ENCODE measurements at regions of chr15 and their contacts with region 1.

Region 1: DNA sequence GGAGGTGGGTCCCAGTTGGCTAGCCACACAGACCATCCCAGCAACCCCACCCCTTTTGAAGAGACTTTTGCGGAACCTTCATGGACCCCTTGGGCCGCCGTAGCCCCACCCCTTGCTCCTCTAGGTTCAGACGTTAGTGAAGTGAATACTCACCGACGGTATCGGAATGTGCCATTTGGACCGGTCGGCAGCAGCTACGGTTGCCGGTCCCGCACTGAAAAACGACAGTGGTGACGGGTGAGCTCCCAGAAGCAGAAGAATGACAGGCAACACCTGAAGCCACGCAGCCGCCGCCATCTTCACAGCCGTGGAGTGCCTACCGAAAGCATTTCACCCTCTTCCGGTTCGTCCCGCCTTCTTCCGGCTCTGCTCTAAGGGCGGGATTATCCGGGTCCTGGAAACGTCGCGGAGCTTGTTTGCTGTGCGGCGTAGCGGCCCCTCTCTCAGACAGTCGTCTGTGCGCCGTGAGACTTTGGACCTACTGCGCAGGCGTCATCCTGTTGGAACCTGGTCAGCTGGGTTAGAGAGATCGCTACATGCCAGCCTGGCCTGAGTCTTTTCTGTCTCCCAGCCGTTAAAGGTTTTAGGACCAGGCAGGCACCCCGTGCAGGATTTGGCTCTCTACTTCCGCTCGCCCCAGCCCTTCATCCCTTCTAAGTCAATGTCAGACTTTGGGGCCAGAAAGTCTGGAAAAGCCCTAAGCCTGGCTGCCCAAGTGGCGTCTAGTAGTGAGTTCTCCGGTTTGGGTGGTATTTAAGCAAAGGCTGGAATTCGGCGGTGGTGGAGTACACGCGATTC is at the starts of genes GANC and TMEM87A:
- DNase-seq: peak; percentile 70 to 96 (median 94)
- ATAC-seq: peak; percentile 95
- H3K4me3 ChIP-seq: peak within 1 kb of the TSS; percentile 71
- H3K4me3 Mint-ChIP-seq: peak within 1 kb of the TSS; percentile 91 to 100 (median 97)
- H3K27ac ChIP-seq: peak within 1 kb of the TSS; percentile 94
- H3K27ac Mint-ChIP-seq: peak within 1 kb of the TSS; percentile 97 to 100 (median 100)
- H3K4me1 ChIP-seq: peaks cover 25 to 26% of the 10 kb centered on the region in 2 donors
- H3K4me1 Mint-ChIP-seq: peaks cover 30 to 76% (median 67%) of the 10 kb centered on the region in 7 donors
- H3K27me3 ChIP-seq: no peaks in the 10 kb centered on the region
- H3K27me3 Mint-ChIP-seq: no peaks in the 10 kb centered on the region
- total RNA-seq, gene GANC: 31.3 to 57.2 (median 45.4) TPM
- total RNA-seq, gene TMEM87A: 41.8 to 61.8 (median 53.7) TPM

Region 2: DNA sequence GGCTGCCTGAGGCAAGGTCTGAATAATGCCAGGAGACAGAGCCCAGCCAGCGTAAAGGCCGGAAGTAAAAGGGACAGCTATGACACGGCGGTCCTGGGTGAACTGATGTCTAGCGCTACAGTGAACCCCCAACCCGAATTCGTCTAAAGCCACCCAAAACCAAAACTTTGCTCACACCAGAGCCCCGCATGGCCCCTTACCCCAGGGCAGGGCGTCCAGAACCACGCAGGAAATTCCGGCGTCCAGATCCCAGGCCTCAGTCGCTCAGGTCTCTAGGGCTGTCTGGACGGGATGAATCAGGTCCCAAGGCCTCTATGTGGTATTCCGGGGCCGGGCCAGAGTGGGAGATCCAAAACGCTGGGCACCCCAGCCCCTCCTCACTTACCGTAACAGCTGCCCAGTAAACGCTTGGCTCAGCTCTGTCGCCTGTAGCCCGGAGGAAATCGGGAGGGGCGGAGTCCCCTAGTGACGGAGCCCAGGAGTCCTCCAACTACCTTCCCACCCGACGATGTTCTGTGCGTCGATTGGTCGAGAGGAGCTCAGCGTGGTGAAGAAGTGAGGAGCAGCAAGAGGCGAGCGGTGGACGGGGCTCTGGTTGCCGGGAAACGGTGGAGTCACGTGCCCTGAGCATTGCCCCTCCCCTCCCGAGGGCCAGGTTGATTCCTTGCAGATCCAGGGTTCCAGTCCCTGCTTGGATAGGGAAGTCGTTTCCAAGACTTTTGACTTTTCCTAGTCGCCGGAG is 1708.5 kb before region 1 on chr15 and contains the start of gene CCDC32:
- CTCF ChIA-PET with region 1: no interaction called
- POLR2A ChIA-PET with region 1: no interaction called
- intact Hi-C with region 1: loop called in 1 of 2 experiments (anchors 10 kb)
- DNase-seq: peak; percentile 75 to 96 (median 93)
- ATAC-seq: peak; percentile 95
- H3K4me3 ChIP-seq: peak within 1 kb of the TSS; percentile 85
- H3K4me3 Mint-ChIP-seq: peak within 1 kb of the TSS; percentile 80 to 97 (median 96)
- H3K27ac ChIP-seq: peak within 1 kb of the TSS; percentile 96
- H3K27ac Mint-ChIP-seq: peak within 1 kb of the TSS; percentile 82 to 98 (median 95)
- H3K4me1 ChIP-seq: peaks cover 11 to 15% of the 10 kb centered on the region in 2 donors
- H3K4me1 Mint-ChIP-seq: peaks cover 35 to 57% (median 55%) of the 10 kb centered on the region in 7 donors
- H3K27me3 ChIP-seq: no peaks in the 10 kb centered on the region
- H3K27me3 Mint-ChIP-seq: peaks cover 0 to 8% (median 0%) of the 10 kb centered on the region in 5 donors
- total RNA-seq, gene CCDC32: 22.4 to 37.3 (median 33.3) TPM

Region 3: GRCh38 chr15:41401904-41402267 is 871.4 kb before region 1 on chr15:
- CTCF ChIA-PET with region 1: no interaction called
- POLR2A ChIA-PET with region 1: no interaction called
- intact Hi-C with region 1: loop called (anchors 1 to 5 kb)
- DNase-seq: no peak
- ATAC-seq: no peak
- H3K4me3 ChIP-seq: peak overlapping the region; percentile 92
- H3K4me3 Mint-ChIP-seq: peak overlapping the region; percentile 87 to 97 (median 96)
- H3K27ac ChIP-seq: peak overlapping the region; percentile 81
- H3K27ac Mint-ChIP-seq: peak overlapping the region; percentile 89 to 96 (median 94)
- H3K4me1 ChIP-seq: peaks cover 0 to 14% of the 10 kb centered on the region in 2 donors
- H3K4me1 Mint-ChIP-seq: peaks cover 0 to 32% (median 24%) of the 10 kb centered on the region in 7 donors
- H3K27me3 ChIP-seq: no peaks in the 10 kb centered on the region
- H3K27me3 Mint-ChIP-seq: no peaks in the 10 kb centered on the region

Region 4: DNA sequence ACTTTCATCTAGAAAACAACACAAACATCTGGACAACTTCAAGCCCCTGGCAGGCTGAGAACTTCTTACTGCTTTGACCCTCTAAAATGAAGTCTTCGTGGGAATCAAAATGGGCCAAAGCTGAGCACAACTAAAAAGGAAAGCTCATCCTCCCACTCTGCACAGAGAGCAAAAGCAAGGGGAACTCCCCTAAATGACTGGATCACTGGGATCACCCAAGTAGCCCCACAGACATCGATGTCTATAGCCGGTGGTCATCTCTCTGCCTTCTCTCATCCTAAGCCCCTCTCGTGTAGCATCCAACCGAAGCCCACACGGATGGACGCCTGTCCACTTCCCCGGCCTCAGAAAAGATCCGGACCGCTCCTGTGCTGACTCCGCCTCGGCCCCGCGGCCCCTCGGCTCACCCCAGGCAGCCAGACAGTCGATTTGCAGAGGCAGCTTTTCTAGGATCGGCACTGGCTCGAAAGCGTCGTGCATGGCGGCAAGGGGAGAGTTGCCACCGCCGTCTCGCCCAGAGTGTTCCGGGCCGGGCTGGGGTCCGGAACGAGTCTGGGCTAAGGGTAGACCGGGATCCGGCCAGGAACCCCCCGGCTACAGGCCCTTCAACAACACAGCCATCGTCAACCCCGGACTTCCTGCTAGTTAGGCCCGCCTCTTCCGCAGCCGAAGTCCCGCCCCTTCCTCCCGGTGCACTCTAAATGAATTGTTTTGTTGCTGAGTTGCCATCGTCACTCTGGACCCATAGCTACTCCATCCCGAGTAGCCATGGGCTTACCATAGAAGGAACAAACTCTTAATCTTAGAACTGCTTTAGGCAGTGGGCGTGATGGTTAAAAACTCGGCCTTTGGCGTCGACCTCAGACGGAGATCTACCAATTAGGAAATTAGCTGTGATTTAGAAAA is 65.4 kb before region 1 on chr15 and contains the start of gene VPS39:
- CTCF ChIA-PET with region 1: no interaction called
- POLR2A ChIA-PET with region 1: interaction called, 17 read pairs
- intact Hi-C with region 1: loop called (anchors 1 kb)
- DNase-seq: peak; percentile 58 to 82 (median 79)
- ATAC-seq: peak; percentile 98
- H3K4me3 ChIP-seq: peak within 1 kb of the TSS; percentile 95
- H3K4me3 Mint-ChIP-seq: peak within 1 kb of the TSS; percentile 79 to 97 (median 95)
- H3K27ac ChIP-seq: peak within 1 kb of the TSS; percentile 89
- H3K27ac Mint-ChIP-seq: peak within 1 kb of the TSS; percentile 79 to 97 (median 93)
- H3K4me1 ChIP-seq: peaks cover 18 to 22% of the 10 kb centered on the region in 2 donors
- H3K4me1 Mint-ChIP-seq: peaks cover 29 to 50% (median 42%) of the 10 kb centered on the region in 7 donors
- H3K27me3 ChIP-seq: no peaks in the 10 kb centered on the region
- H3K27me3 Mint-ChIP-seq: no peaks in the 10 kb centered on the region
- total RNA-seq, gene VPS39: 82.9 to 115 (median 97.3) TPM

Region 5: GRCh38 chr15:42385206-42385979 is 112.1 kb after region 1 on chr15:
- CTCF ChIA-PET with region 1: no interaction called
- POLR2A ChIA-PET with region 1: no interaction called
- intact Hi-C with region 1: no loop called
- DNase-seq: no peak
- ATAC-seq: peak; percentile 57
- H3K4me3 ChIP-seq: no peak overlapping the region
- H3K4me3 Mint-ChIP-seq: no peak overlapping the region
- H3K27ac ChIP-seq: no peak overlapping the region
- H3K27ac Mint-ChIP-seq: no peak overlapping the region
- H3K4me1 ChIP-seq: no peaks in the 10 kb centered on the region
- H3K4me1 Mint-ChIP-seq: peaks cover 0 to 4% (median 0%) of the 10 kb centered on the region in 7 donors
- H3K27me3 ChIP-seq: no peaks in the 10 kb centered on the region
- H3K27me3 Mint-ChIP-seq: no peaks in the 10 kb centered on the region

Region 6: DNA sequence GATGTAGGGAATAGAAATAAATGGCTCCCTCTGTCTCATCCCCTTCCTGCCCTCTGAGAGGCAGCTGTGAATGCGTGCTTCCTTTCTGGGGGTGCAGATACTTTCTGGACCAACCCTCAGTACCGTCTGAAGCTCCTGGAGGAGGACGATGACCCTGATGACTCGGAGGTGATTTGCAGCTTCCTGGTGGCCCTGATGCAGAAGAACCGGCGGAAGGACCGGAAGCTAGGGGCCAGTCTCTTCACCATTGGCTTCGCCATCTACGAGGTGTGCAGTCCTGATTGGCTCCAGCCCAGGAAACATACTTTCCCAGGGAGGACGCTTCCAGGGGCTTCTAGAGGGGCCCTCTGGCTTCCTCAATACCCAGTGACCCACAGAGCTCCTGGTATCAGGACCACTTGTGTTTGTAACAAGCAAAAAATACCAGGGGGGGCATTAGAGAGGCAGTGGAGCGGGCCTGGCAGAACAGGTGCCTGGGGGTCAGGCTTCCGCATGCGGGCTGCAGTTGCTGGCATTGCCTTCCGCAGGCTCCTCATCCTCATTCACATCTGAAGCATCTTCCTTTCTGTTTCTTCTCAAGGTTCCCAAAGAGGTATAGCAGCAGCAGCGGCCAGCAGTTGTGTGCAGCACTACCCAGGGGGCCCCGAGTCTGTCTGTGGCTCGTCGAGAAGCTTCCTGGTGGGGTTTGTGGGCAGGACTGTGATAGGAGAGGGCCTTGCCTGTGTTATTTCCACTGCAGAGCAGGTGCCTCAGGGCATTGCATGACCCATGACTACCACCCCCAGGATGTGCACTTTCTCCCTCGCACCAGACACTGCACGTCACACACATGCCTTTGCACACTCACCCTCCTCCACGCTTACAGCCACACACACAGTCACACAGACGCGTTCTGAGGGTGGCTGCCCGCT is 128.5 kb after region 1 on chr15:
- CTCF ChIA-PET with region 1: no interaction called
- POLR2A ChIA-PET with region 1: no interaction called
- intact Hi-C with region 1: no loop called
- DNase-seq: no peak
- ATAC-seq: peak; percentile 29
- H3K4me3 ChIP-seq: no peak overlapping the region
- H3K4me3 Mint-ChIP-seq: peak overlapping the region in 3 of 10 donors; percentile 47 to 57 (median 55)
- H3K27ac ChIP-seq: no peak overlapping the region
- H3K27ac Mint-ChIP-seq: peak overlapping the region in 2 of 9 donors; percentile 30 to 43
- H3K4me1 ChIP-seq: no peaks in the 10 kb centered on the region
- H3K4me1 Mint-ChIP-seq: peaks cover 0 to 10% (median 0%) of the 10 kb centered on the region in 7 donors
- H3K27me3 ChIP-seq: no peaks in the 10 kb centered on the region
- H3K27me3 Mint-ChIP-seq: no peaks in the 10 kb centered on the region

Region 7: DNA sequence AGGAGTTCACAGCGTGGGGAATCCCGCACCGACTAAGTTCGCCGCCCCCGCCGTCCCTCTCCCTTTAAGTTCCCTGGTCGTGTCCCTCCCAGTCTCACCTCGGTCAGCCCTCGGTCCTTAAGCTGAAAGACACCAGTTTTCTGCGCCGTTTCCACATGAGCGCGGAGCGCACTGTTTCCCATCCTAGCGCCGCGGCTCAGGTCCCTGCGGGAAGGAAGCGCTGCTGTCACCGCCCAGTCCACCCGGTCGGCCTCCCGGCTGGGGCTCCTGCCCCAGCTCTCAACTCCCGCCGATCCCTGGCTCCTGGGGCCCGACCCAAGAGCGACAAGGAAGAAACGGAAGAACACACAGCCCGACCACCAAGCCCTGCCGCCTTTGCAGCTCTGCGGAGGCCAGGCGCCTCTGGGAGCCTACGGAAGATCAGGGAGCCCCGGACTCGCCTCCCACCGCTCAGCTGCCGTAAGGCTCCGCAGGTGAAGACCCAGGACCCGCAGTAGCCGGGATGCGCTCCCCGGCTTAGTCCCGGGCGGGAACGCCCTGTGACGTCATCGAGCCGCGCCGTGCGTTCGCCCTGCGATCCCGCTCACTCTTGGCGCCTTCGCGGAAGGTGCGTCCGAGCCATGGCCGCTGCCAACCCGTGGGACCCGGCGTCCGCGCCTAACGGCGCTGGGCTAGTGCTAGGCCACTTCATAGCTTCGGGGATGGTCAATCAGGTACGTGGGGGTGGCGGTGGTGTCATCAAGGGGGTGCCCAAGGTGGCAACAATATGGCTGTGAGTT is 275.1 kb after region 1 on chr15 and contains the starts of genes HAUS2 and LRRC57:
- CTCF ChIA-PET with region 1: no interaction called
- POLR2A ChIA-PET with region 1: interaction called, 3 read pairs
- intact Hi-C with region 1: loop called (anchors 1 kb)
- DNase-seq: peak; percentile 79 to 93 (median 86)
- ATAC-seq: peak; percentile 89
- H3K4me3 ChIP-seq: peak within 1 kb of the TSS; percentile 86
- H3K4me3 Mint-ChIP-seq: peak within 1 kb of the TSS; percentile 93 to 99 (median 96)
- H3K27ac ChIP-seq: peak within 1 kb of the TSS; percentile 93
- H3K27ac Mint-ChIP-seq: peak within 1 kb of the TSS; percentile 95 to 99 (median 97)
- H3K4me1 ChIP-seq: peaks cover 21 to 23% of the 10 kb centered on the region in 2 donors
- H3K4me1 Mint-ChIP-seq: peaks cover 29 to 62% (median 51%) of the 10 kb centered on the region in 7 donors
- H3K27me3 ChIP-seq: no peaks in the 10 kb centered on the region
- H3K27me3 Mint-ChIP-seq: no peaks in the 10 kb centered on the region
- total RNA-seq, gene HAUS2: 12.0 to 35.4 (median 16.8) TPM
- total RNA-seq, gene LRRC57: 15.4 to 37.1 (median 18.0) TPM

Region 8: DNA sequence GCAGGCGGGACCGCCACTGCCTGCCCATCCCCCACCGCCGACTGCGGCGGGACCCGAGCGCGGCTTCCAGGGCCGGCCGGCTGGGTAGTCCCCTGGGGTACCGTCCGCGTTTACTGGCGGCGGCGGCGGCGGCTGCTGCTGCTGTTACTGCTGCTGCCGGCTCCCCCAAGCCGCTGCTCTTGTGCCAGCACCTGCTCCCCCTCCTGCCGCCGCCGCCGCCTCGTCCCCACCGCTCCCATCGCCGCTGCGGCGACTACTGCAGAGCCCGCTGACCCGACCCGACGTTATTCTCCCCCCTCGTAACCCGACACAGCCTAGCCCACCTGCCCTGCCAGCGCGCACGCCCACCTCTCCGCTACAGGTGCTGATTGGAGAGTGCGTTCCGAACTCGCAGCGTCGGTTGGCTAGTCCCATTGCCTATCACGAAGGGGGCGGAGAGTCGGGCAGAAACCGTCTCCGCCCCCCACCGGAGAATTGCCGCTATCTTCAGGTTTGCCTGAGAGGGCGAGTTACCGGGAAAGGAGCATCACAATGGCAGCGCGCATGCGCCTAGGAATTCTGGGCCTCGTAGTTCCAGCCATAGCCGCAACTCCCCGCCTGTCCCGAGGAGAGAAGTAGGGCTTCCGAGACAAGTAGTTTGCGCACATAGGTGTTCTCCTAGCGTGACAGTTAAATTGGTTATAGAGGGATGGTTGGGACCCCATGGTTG is 647.4 kb after region 1 on chr15 and contains the start of gene TTBK2:
- CTCF ChIA-PET with region 1: no interaction called
- POLR2A ChIA-PET with region 1: no interaction called
- intact Hi-C with region 1: loop called (anchors 2 to 5 kb)
- DNase-seq: peak; percentile 93 to 98 (median 97)
- ATAC-seq: peak; percentile 98
- H3K4me3 ChIP-seq: peak within 1 kb of the TSS; percentile 89
- H3K4me3 Mint-ChIP-seq: peak within 1 kb of the TSS; percentile 93 to 100 (median 97)
- H3K27ac ChIP-seq: peak within 1 kb of the TSS; percentile 71
- H3K27ac Mint-ChIP-seq: peak within 1 kb of the TSS; percentile 88 to 97 (median 95)
- H3K4me1 ChIP-seq: peaks cover 4 to 5% of the 10 kb centered on the region in 2 donors
- H3K4me1 Mint-ChIP-seq: peaks cover 14 to 40% (median 29%) of the 10 kb centered on the region in 7 donors
- H3K27me3 ChIP-seq: no peaks in the 10 kb centered on the region
- H3K27me3 Mint-ChIP-seq: peaks cover 0 to 3% (median 0%) of the 10 kb centered on the region in 5 donors
- total RNA-seq, gene TTBK2: 15.7 to 30.5 (median 28.8) TPM

Region 9: GRCh38 chr15:43510200-43511011 is 1237.1 kb after region 1 on chr15:
- CTCF ChIA-PET with region 1: no interaction called
- POLR2A ChIA-PET with region 1: interaction called, 4 read pairs
- intact Hi-C with region 1: loop called (anchors 5 kb)
- DNase-seq: peak; percentile 91 to 96 (median 94)
- ATAC-seq: peak; percentile 97
- H3K4me3 ChIP-seq: peak overlapping the region; percentile 88
- H3K4me3 Mint-ChIP-seq: peak overlapping the region; percentile 89 to 100 (median 94)
- H3K27ac ChIP-seq: peak overlapping the region; percentile 76
- H3K27ac Mint-ChIP-seq: peak overlapping the region; percentile 92 to 99 (median 97)
- H3K4me1 ChIP-seq: peaks cover 14 to 17% of the 10 kb centered on the region in 2 donors
- H3K4me1 Mint-ChIP-seq: peaks cover 14 to 51% (median 28%) of the 10 kb centered on the region in 7 donors
- H3K27me3 ChIP-seq: no peaks in the 10 kb centered on the region
- H3K27me3 Mint-ChIP-seq: peaks cover 0 to 2% (median under 1%) of the 10 kb centered on the region in 5 donors

Measured in naive thymus-derived CD4-positive, alpha-beta T cell (primary cell).